AG04450 (cell line): ENCODE measurements at regions of chr5 and their contacts with region 1.

Region 1: GRCh38 chr5:50947906-50948683 is 281.7 kb downstream of the PARP8 start:
- DNase-seq: no peak
- H3K4me3 ChIP-seq: no peak overlapping the region
- H3K27ac ChIP-seq: no peak overlapping the region
- H3K27me3 ChIP-seq: no peaks in the 10 kb centered on the region
- CTCF ChIP-seq: no peak

Region 2: DNA sequence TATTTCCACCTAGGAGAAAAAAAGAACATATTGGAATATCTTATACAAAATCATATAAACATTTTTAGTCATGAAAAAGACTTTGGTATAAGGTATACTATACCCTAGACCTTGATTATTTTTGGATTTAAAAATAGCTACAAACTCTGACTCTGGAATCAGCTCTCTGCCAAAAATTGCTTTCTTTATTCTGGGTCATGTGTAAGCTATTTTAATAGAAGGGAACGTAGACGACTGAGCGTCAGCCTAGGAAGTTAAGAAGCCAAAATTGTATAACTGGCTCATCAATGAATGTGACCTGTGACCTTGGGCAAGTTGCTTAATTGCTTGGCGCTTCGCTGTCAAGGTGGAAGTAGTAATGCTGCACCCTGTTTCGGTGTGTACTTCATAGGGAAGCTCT is 124.5 kb before region 1 on chr5:
- CTCF ChIA-PET with region 1: no interaction called
- POLR2A ChIA-PET with region 1: interaction called, 10 read pairs
- DNase-seq: no peak
- H3K4me3 ChIP-seq: no peak overlapping the region
- H3K27ac ChIP-seq: no peak overlapping the region
- H3K27me3 ChIP-seq: no peaks in the 10 kb centered on the region
- CTCF ChIP-seq: no peak